ENCODE measurements at regions of chr9 and their contacts with region 1.

Region 1: GRCh38 chr9:35664531-35665470 is at the start of gene ARHGEF39:
- DNase-seq: peak; percentile 87
- ATAC-seq: peak; percentile 87
- H3K4me3 Mint-ChIP-seq: peak within 1 kb of the TSS; percentile 91
- H3K27ac Mint-ChIP-seq: peak within 1 kb of the TSS; percentile 87
- H3K4me1 Mint-ChIP-seq: peaks cover 53% of the 10 kb centered on the region
- H3K27me3 Mint-ChIP-seq: no peaks in the 10 kb centered on the region
- total RNA-seq, gene ARHGEF39: 13.1 to 13.4 TPM

Region 2: DNA sequence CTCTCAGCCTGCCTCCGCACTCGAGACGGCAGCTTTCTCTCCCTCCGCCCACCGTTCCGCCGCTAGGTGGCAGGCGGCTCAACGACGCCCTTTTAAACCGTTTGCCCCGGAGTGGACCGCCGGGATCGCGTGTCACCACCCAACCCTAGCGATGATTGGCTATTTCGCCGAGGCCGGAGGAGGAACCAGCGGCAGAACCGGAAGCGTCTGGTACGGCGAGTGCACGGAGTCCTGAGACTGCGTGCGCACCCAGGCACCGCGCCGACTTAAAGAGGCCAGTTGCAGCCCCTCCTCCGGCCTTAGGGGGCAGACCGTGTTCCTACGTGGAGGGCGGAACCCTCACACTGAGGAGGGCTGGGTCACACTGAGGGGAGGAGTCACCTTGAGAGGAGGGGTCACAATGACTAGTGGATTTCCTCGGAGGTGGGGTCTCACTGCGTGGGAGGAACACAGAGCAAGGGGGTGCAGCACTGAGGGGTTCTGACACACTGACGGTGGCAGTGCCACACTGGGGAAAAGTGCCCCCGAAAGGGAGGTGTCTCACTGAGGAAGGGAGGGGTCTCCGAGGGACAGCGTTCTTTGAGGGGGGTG is 60.7 kb before region 1 on chr9:
- POLR2A ChIA-PET with region 1: interaction called, 17 read pairs
- DNase-seq: peak; percentile 96
- ATAC-seq: peak; percentile 86
- H3K4me3 Mint-ChIP-seq: peak overlapping the region; percentile 93
- H3K27ac Mint-ChIP-seq: peak overlapping the region; percentile 97
- H3K4me1 Mint-ChIP-seq: peaks cover 31% of the 10 kb centered on the region
- H3K27me3 Mint-ChIP-seq: no peaks in the 10 kb centered on the region

Region 3: GRCh38 chr9:35675732-35676392 is 11.1 kb after region 1 on chr9:
- POLR2A ChIA-PET with region 1: interaction called, 18 read pairs
- DNase-seq: peak; percentile 64
- ATAC-seq: peak; percentile 73
- H3K4me3 Mint-ChIP-seq: peak overlapping the region; percentile 76
- H3K27ac Mint-ChIP-seq: no peak overlapping the region
- H3K4me1 Mint-ChIP-seq: peaks cover 10% of the 10 kb centered on the region
- H3K27me3 Mint-ChIP-seq: peaks cover 30% of the 10 kb centered on the region

Region 4: GRCh38 chr9:35690431-35691333 is 25.9 kb after region 1 on chr9:
- POLR2A ChIA-PET with region 1: interaction called, 11 read pairs
- DNase-seq: peak; percentile 49
- ATAC-seq: peak; percentile 37
- H3K4me3 Mint-ChIP-seq: peak overlapping the region; percentile 91
- H3K27ac Mint-ChIP-seq: peak overlapping the region; percentile 78
- H3K4me1 Mint-ChIP-seq: peaks cover 12% of the 10 kb centered on the region
- H3K27me3 Mint-ChIP-seq: no peaks in the 10 kb centered on the region